ENCODE measurements at regions of chr6 and their contacts with region 1.

Region 1: GRCh38 chr6:36423101-36423824 is 19.4 kb downstream of the PXT1 start:
- DNase-seq: peak; percentile 100
- ATAC-seq: peak; percentile 100

Region 2: DNA sequence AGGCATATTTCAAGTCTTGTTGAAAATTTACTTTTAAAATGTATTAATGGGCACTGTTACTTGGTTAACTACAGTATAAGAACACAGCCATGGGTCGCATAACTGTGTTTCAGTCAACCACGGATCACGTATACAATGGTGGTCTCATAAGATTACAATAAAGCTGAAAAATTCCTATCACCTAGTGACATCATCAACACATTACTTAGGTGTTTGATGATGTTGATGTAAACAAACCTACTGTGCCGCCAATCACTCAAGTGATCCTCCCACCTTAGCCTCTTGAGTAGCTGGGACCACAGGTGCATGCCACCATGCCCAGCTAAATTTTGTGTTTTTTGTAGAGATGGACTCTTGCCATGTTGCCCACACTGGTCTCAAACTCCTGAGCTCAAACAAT is 19.1 kb before region 1 on chr6:
- intact Hi-C with region 1: no loop called
- DNase-seq: no peak
- ATAC-seq: no peak

Region 3: DNA sequence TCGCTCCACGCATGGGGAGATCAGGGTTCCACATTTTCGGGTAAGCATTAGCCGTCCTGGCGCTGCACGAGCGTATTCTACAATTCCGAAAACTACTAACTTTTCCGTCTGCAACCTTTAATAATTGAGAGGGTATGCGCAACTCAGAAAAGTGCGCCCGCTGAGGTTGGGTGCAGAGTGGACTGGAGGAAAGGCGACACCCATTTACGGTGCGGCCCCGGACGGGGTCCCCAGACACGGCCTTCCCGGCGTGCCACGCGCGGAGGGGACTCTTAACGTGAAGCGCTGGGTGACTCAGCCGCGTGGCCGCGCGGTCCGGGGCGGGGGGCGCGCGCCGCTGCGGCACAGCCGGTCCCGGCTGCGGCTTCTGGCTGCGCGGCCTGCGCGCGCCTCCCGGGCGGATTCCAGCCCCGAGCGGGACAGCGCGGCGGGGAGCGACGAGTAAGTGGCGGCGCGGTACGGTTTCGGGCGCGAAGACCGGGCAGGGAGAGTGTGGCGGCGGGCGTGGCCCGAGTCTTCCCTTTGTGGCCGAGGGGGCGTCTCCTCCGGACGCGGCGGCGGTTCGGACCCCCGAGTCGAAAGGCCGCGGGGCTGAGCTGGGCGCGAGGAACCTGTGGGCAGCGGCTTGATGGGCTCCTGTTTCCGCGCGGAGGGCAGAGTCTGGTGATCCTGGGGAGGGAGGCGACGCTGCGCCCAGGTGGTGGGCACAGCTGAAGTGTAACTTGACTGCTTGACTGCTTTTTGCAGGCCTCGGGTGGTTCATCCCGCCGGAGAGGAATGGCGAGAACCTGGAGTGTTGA is 19.6 kb after region 1 on chr6 and contains the starts of genes KCTD20 and PXT1:
- intact Hi-C with region 1: loop called (anchors 2 kb)
- DNase-seq: peak; percentile 96
- ATAC-seq: peak; percentile 92
- total RNA-seq, gene KCTD20: 26.4 TPM
- total RNA-seq, gene PXT1: not detected

Region 4: DNA sequence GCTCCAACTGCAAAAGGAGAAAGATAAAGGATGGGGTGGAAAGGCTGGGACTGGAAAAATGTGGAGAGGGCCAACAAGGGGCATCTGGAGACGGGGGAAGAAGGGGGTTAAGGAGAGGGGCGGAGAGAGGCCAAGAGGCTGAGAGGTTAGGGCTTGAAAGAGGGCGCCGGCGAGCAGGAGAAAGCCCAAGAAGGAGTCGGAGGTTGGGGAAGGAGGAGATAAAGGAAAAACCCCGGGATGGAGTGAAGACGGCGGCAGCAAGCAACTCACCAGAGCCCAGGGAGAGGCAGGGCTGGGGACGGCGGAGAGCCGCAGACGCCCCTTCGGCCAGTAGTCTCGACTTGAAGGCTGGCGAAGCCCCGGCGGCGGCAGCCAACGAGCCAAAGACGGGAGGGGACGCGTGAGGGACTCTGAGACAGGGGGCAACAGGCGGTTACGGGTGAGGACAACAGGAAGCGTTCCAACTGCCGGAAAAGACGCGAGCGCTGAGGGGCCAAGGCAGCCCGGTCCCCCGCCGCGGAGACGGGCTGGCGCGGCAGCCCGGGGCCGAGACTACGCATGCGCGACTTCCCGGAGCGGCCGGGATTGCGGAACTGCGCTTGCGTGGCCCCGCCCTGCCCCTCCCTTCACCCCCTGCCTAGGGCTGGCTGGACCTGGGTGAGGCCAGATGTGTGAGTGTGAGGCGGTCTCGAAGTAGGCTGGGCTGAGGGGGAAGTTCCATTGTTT is 123.8 kb after region 1 on chr6 and contains the start of gene STK38:
- intact Hi-C with region 1: loop called (anchors 5 kb)
- DNase-seq: peak; percentile 94
- ATAC-seq: peak; percentile 98
- total RNA-seq, gene STK38: 22.6 TPM

Region 5: GRCh38 chr6:36594029-36594815 is 171.0 kb after region 1 on chr6 and contains the start of gene SRSF3:
- intact Hi-C with region 1: loop called (anchors 1 kb)
- DNase-seq: peak; percentile 97
- ATAC-seq: peak; percentile 98
- total RNA-seq, gene SRSF3: 119 TPM

Region 6: GRCh38 chr6:36759148-36759759 is 336.0 kb after region 1 on chr6:
- intact Hi-C with region 1: loop called (anchors 2 kb)
- DNase-seq: peak; percentile 91
- ATAC-seq: peak; percentile 87

Measured in Right ventricle myocardium inferior (tissue), 1 donor.